ENCODE measurements at regions of chr11 and their contacts with region 1.

Region 1: DNA sequence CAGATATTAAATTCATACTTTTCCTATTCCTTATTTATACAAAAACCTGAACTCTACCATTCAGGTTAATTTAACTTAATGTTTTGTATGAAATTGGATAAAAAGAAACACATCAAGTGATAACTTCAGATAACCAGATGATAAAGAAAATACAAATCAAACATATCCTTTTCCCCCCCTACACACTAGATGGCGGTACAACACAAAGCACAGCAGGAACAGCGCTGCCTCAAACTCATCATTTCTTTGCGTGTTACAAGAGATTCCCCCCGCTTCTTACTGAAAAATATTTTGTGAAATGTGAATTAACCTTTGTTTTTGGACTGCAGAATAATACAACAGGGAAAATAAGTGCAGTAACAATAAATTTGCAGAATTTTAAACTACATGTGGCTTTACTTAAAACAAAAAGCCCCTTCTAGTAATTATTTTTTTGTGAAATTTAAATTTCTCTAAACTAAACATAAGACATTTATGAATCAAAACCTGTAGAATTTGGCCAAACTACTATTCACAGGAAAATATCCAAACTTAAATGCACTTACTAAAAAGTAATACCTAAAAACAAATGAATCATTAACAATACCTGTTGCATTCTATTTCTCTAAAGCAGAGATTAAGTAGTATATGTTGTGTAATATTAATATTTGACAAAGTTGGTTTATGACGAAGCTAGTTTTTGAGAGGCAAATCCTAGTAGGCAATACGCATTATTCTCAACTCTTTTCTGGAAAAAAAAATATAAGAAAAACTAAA is 74.4 kb downstream of the ARHGAP32 start:
- DNase-seq: no peak
- ATAC-seq: peak in 3 of 4 donors; percentile 69 to 75 (median 74)
- H3K4me3 ChIP-seq: no peak overlapping the region
- H3K27ac ChIP-seq: no peak overlapping the region
- H3K4me1 ChIP-seq: no peaks in the 10 kb centered on the region
- H3K27me3 ChIP-seq: no peaks in the 10 kb centered on the region
- CTCF ChIP-seq: peak; percentile 87

Region 2: DNA sequence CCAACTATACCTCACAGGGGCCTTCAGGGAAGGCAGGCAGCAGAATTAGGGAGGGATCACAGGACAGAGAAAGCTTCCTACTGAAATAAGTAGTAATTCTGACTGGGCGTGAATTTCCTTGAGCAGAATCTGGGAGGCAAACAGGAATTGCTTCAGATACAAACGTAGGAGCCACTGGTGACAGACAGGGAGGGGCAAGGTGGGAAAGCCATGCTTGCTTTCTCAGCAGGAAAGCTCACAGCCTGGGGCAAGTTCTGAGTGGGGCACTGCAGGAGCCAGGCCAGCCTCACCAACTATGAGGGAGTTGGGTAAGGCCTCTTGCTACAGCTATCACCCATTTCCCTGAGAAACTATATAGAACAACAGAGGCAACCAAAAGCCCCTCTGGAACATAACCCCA is 30.7 kb after region 1 on chr11:
- intact Hi-C with region 1: no loop called
- DNase-seq: no peak
- ATAC-seq: no peak
- H3K4me3 ChIP-seq: no peak overlapping the region
- H3K27ac ChIP-seq: no peak overlapping the region
- H3K4me1 ChIP-seq: no peaks in the 10 kb centered on the region
- H3K27me3 ChIP-seq: no peaks in the 10 kb centered on the region
- CTCF ChIP-seq: no peak

Region 3: GRCh38 chr11:129331871-129332274 is 214.1 kb after region 1 on chr11:
- intact Hi-C with region 1: loop called (anchors 2 kb)
- DNase-seq: peak; percentile 77 to 84
- ATAC-seq: peak; percentile 81 to 95 (median 94)
- H3K4me3 ChIP-seq: no peak overlapping the region
- H3K27ac ChIP-seq: no peak overlapping the region
- H3K4me1 ChIP-seq: no peaks in the 10 kb centered on the region
- H3K27me3 ChIP-seq: no peaks in the 10 kb centered on the region
- CTCF ChIP-seq: peak; percentile 85

Region 4: DNA sequence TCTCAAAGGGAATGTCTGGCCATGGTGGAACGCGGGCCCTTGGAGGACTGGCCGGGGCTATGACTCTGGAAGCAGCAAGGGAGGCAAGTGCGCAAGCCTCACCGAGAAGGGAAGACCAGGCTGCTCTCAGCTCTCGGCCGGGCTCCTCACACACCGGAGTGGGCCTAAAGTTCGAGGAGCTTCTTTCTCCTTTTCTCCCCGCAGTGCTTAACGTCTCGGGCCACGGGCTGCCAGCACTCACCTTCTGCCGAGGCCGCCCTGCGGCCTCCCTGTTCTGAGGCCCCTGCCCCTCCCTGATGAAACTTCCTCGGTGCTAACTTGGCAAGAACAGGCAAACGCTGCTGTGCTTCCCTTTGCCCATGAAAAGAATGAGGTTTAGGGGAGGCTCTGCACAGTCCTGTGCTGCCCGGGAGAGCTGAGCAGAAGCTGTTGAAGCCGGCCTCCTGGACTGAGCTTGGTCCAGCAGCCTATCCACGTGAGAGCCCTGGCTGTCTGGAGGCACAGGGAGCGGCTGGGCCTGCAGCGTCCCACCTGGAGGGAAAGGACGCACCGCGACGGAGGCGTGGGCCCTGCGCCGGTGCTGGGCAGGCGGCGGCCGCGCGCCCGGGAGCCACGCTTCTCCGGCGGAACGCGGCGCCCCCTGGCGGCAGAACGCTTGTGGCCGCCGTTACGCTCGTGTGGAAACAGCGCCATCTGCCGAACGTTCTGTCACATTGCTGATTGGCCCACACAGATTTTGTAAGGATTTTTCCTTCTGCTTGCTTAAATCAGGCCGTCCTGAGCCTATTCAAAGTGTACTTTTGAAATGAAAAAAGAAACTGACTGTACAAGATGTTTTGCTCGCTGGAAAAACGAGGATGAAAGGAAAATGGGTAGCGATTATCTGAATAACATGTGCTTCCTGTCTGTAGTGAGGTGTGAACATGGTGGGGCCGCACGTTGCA is 632.8 kb after region 1 on chr11:
- intact Hi-C with region 1: loop called (anchors 5 to 10 kb)
- DNase-seq: peak; percentile 73 to 82
- ATAC-seq: peak; percentile 85 to 92 (median 88)
- H3K4me3 ChIP-seq: peak overlapping the region; percentile 40
- H3K27ac ChIP-seq: no peak overlapping the region
- H3K4me1 ChIP-seq: no peaks in the 10 kb centered on the region
- H3K27me3 ChIP-seq: peaks cover 0 to 12% (median 3%) of the 10 kb centered on the region in 3 donors
- CTCF ChIP-seq: peak; percentile 98

Measured in psoas muscle (tissue), 8 donors.